ENCODE measurements at regions of chr15 and their contacts with region 1.

Region 1: DNA sequence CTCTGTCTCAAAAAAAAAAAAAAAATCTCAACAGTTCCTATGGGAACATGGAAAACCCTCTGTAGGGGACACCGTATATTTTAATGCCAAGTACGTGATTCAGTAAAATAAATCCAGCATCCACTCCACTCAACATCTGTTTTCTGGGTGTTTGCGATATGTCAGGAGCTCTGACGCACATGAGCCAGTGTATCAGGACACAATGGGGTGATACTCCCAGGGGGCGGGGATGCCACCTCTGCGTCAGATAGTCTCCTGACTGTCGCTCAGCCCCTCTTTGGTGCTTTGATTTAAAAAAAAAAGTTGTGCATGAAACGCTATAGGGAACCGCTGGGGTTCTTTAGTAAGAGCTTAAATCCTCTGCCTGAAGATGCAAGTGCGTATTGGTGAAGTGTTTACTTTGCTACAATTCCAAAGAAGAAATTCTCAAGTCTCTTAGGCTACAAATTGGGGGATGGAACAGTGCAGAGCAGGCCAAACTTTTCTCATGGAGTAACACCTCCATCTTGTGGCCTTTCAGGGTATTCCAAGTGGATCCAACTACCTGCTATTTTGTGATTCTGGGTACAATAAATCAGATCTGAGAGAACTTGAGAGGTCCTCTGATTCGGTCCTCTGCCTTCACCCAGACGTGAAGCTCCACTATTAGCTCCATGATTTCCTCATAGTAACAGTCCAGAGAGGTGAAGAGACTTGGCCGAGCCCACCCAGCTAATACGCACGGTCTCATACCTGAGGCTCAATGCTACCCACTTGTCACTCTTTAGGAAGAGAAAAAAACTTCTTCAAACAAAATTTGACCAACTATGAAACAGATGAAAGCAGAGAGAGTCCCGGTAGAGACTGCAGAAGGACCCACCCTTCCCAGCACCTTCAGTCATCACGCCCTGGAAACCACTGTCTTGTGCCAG is 9.3 kb upstream of the NR2E3 start:
- DNase-seq: peak; percentile 56
- ATAC-seq: peak; percentile 88
- H3K4me3 ChIP-seq: no peak overlapping the region
- H3K27ac ChIP-seq: no peak overlapping the region
- H3K4me1 ChIP-seq: no peaks in the 10 kb centered on the region; a peak in 1 of 4 replicates
- H3K27me3 ChIP-seq: no peaks in the 10 kb centered on the region
- CTCF ChIP-seq: peak; percentile 74 to 91 (median 82); a peak in 5 of 6 replicates
- POLR2A ChIP-seq: no peak
- RAD21 ChIP-seq: peak; percentile 94

Region 2: GRCh38 chr15:70974004-70974832 is 826.9 kb before region 1 on chr15:
- CTCF ChIA-PET with region 1: no interaction called
- POLR2A ChIA-PET with region 1: no interaction called
- RAD21 ChIA-PET with region 1: no interaction called
- intact Hi-C with region 1: loop called (anchors 2 kb)
- DNase-seq: peak; percentile 45
- ATAC-seq: peak; percentile 44; the same call in 1 of the 2 replicates
- H3K4me3 ChIP-seq: no peak overlapping the region
- H3K27ac ChIP-seq: no peak overlapping the region
- H3K4me1 ChIP-seq: no peaks in the 10 kb centered on the region
- H3K27me3 ChIP-seq: no peaks in the 10 kb centered on the region
- CTCF ChIP-seq: peak; percentile 36 to 56 (median 39); a peak in 5 of 6 replicates
- POLR2A ChIP-seq: no peak
- RAD21 ChIP-seq: peak; percentile 73

Region 3: GRCh38 chr15:71386448-71387236 is 414.4 kb before region 1 on chr15:
- CTCF ChIA-PET with region 1: no interaction called
- POLR2A ChIA-PET with region 1: no interaction called
- RAD21 ChIA-PET with region 1: no interaction called
- intact Hi-C with region 1: loop called (anchors 10 kb)
- DNase-seq: no peak
- ATAC-seq: no peak
- H3K4me3 ChIP-seq: no peak overlapping the region
- H3K27ac ChIP-seq: no peak overlapping the region
- H3K4me1 ChIP-seq: peaks cover 11 to 17% of the 10 kb centered on the region in 2 experiments
- H3K27me3 ChIP-seq: no peaks in the 10 kb centered on the region
- CTCF ChIP-seq: peak; percentile 12 to 49 (median 46); a peak in 4 of 6 replicates
- POLR2A ChIP-seq: no peak
- RAD21 ChIP-seq: peak; percentile 67

Region 4: GRCh38 chr15:71494563-71495397 is 306.3 kb before region 1 on chr15:
- CTCF ChIA-PET with region 1: no interaction called
- POLR2A ChIA-PET with region 1: no interaction called
- RAD21 ChIA-PET with region 1: no interaction called
- intact Hi-C with region 1: no loop called
- DNase-seq: no peak
- ATAC-seq: no peak
- H3K4me3 ChIP-seq: no peak overlapping the region
- H3K27ac ChIP-seq: no peak overlapping the region
- H3K4me1 ChIP-seq: peaks cover 0 to 5% of the 10 kb centered on the region in 2 experiments; a peak in 1 of 4 replicates
- H3K27me3 ChIP-seq: no peaks in the 10 kb centered on the region
- CTCF ChIP-seq: no peak
- POLR2A ChIP-seq: no peak
- RAD21 ChIP-seq: no peak

Region 5: DNA sequence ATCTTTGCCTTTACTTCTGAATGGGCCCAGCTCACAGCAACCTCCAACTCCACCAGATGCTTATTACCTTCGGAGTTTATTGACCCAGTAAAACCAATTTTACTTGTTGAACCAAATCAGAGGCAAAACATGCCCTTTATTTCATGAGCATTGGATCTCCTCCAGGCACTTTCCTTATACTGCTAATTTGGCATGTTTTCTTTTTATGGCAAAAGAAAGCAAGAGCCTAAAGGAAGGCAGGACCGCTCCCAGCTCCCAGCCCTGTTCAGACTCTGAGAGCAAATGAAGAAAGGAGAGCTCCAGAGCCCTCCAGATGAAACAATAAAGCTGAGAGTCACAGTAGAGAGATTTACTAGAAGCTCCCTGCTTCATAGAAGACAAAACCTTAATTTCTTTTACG is 72.2 kb before region 1 on chr15:
- CTCF ChIA-PET with region 1: no interaction called
- POLR2A ChIA-PET with region 1: no interaction called
- RAD21 ChIA-PET with region 1: no interaction called
- intact Hi-C with region 1: no loop called
- DNase-seq: no peak
- ATAC-seq: no peak
- H3K4me3 ChIP-seq: no peak overlapping the region
- H3K27ac ChIP-seq: no peak overlapping the region
- H3K4me1 ChIP-seq: no peaks in the 10 kb centered on the region
- H3K27me3 ChIP-seq: no peaks in the 10 kb centered on the region
- CTCF ChIP-seq: no peak
- POLR2A ChIP-seq: no peak
- RAD21 ChIP-seq: no peak

Region 6: DNA sequence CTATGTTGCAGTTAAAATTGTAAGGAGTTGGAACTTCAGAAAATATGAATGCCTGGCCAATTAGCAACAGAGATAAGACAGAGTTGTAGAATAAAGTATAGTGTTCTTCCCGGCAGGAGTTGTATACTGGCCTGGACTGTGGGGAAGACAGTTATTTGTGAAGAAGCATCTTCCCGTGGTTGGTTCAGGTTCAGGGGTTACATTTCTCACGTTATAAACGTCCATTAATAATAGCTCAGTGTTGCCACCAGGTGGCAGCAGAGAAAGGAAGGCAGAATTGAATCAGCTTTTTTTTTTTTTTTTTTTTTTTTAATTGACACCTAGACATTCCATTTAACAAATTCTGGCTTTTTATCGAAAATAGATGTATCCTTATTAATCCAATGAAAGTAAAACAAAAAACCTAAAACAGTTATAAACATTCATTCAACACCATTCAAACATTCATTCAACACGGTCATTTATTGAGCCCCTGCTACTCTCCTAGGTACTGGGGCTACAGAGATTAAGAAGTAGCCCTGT is 57.2 kb before region 1 on chr15:
- CTCF ChIA-PET with region 1: interaction called, 20 read pairs
- POLR2A ChIA-PET with region 1: interaction called, 9 read pairs
- RAD21 ChIA-PET with region 1: no interaction called
- intact Hi-C with region 1: loop called (anchors 1 kb)
- DNase-seq: no peak
- ATAC-seq: no peak
- H3K4me3 ChIP-seq: no peak overlapping the region
- H3K27ac ChIP-seq: no peak overlapping the region
- H3K4me1 ChIP-seq: peaks cover 27 to 33% of the 10 kb centered on the region in 2 experiments
- H3K27me3 ChIP-seq: no peaks in the 10 kb centered on the region
- CTCF ChIP-seq: peak; percentile 57 to 78 (median 64); a peak in 5 of 6 replicates
- POLR2A ChIP-seq: no peak
- RAD21 ChIP-seq: peak; percentile 71

Region 7: DNA sequence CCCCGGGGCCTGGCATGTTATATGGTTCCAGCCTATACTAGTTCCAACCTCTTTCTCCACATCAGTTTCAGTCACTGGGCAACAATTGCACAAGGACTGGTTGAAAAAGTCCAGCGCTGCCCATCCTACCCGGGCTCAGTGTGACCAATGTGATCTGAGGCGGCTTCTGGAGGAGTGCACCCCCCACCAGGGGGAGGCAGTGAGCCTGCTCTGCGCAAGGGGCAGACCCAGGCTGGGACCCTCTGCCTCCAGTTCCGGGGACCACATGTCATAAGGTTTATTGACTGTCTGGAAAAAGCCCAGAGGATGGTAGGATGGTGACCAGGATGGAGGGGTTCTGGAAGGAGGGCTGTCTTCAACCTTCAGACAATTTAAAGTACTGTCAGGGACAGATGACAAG is 16.4 kb before region 1 on chr15:
- CTCF ChIA-PET with region 1: no interaction called
- POLR2A ChIA-PET with region 1: no interaction called
- RAD21 ChIA-PET with region 1: no interaction called
- intact Hi-C with region 1: no loop called
- DNase-seq: no peak
- ATAC-seq: peak; percentile 76
- H3K4me3 ChIP-seq: no peak overlapping the region
- H3K27ac ChIP-seq: no peak overlapping the region
- H3K4me1 ChIP-seq: peaks cover 7 to 13% of the 10 kb centered on the region in 2 experiments; a peak in 3 of 4 replicates
- H3K27me3 ChIP-seq: no peaks in the 10 kb centered on the region
- CTCF ChIP-seq: peak; percentile 29 to 87 (median 68); a peak in 5 of 6 replicates
- POLR2A ChIP-seq: no peak
- RAD21 ChIP-seq: peak; percentile 41

Region 8: GRCh38 chr15:72155635-72156616 is 354.8 kb after region 1 on chr15:
- CTCF ChIA-PET with region 1: interaction called, 35 read pairs
- POLR2A ChIA-PET with region 1: no interaction called
- RAD21 ChIA-PET with region 1: no interaction called
- intact Hi-C with region 1: loop called (anchors 1 kb)
- DNase-seq: peak; percentile 59
- ATAC-seq: peak; percentile 99
- H3K4me3 ChIP-seq: no peak overlapping the region
- H3K27ac ChIP-seq: no peak overlapping the region
- H3K4me1 ChIP-seq: peaks cover 4 to 12% of the 10 kb centered on the region in 2 experiments; a peak in 3 of 4 replicates
- H3K27me3 ChIP-seq: no peaks in the 10 kb centered on the region
- CTCF ChIP-seq: peak; percentile 74 to 92 (median 84); a peak in 5 of 6 replicates
- POLR2A ChIP-seq: no peak
- RAD21 ChIP-seq: peak; percentile 95